ENCODE measurements at regions of chr10 and their contacts with region 1.

Region 1: GRCh38 chr10:7797582-7797981 is 9.6 kb downstream of the ATP5F1C start:
- H3K4me3 ChIP-seq: no peak overlapping the region
- H3K27ac ChIP-seq: no peak overlapping the region
- H3K4me1 ChIP-seq: peaks cover 7% of the 10 kb centered on the region
- CTCF ChIP-seq: no peak

Region 2: GRCh38 chr10:7666253-7667081 is 131.1 kb before region 1 on chr10 and contains the start of gene ITIH5:
- CTCF ChIA-PET with region 1: no interaction called
- POLR2A ChIA-PET with region 1: no interaction called
- H3K4me3 ChIP-seq: peak within 1 kb of the TSS; percentile 59
- H3K27ac ChIP-seq: no peak within 1 kb of the TSS
- H3K4me1 ChIP-seq: 0 out of 2 replicates have a peak, but pooled peaks cover 2% of the 10 kb centered on the region
- CTCF ChIP-seq: no peak

Region 3: GRCh38 chr10:7818295-7819122 is 20.9 kb after region 1 on chr10 and contains the start of gene TAF3:
- CTCF ChIA-PET with region 1: interaction called, 3 read pairs
- POLR2A ChIA-PET with region 1: interaction called, 14 read pairs
- H3K4me3 ChIP-seq: peak within 1 kb of the TSS; percentile 75
- H3K27ac ChIP-seq: peak within 1 kb of the TSS; percentile 61; the same call in 1 of the 2 replicates
- H3K4me1 ChIP-seq: peaks cover 3% of the 10 kb centered on the region; the same call in 1 of the 2 replicates
- CTCF ChIP-seq: no peak